WTC11 (cell line): ENCODE measurements at regions of chr6 and their contacts with region 1.

Region 1: DNA sequence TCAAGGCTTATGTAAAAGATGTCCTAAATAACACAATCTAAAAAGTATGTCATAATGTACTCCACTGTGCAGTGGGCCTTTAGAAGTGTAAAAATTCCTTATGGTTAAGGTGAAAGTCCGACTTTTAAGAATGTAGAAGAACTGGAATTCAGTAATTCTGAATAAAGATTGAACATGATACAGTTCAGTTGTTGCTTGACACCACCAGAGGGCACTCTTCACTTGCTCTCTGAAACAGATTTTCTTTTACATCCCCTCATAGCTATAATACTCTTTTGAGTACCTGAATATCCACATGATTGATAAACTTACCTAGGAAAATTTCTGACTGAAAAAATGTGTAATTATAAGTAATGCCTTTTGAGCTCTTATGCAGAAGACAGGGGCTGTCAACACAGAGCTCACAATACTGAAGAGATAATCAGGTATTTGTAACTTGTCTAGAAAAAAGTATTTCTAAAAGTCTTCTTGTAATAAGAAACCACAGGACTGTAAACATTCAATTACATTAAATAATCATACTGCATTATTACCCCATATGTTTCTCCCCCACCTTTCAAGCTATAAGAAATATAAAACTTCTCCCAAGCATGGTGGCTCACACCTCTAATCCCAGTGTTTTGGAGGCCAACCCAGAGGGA is 92.1 kb downstream of the POPDC3 start:
- DNase-seq: no peak
- ATAC-seq: peak; percentile 20; the same call in 1 of the 2 replicates
- H3K4me3 Mint-ChIP-seq: no peak overlapping the region
- H3K27ac Mint-ChIP-seq: no peak overlapping the region
- H3K4me1 Mint-ChIP-seq: no peaks in the 10 kb centered on the region
- H3K27me3 Mint-ChIP-seq: no peaks in the 10 kb centered on the region
- CTCF ChIP-seq: peak; percentile 79

Region 2: GRCh38 chr6:105363100-105363754 is 275.5 kb after region 1 on chr6:
- CTCF ChIA-PET with region 1: interaction called, 20 read pairs
- POLR2A ChIA-PET with region 1: no interaction called
- DNase-seq: no peak
- ATAC-seq: no peak
- H3K4me3 Mint-ChIP-seq: no peak overlapping the region
- H3K27ac Mint-ChIP-seq: no peak overlapping the region
- H3K4me1 Mint-ChIP-seq: peaks cover 2% of the 10 kb centered on the region; the same call in 1 of the 2 replicates
- H3K27me3 Mint-ChIP-seq: no peaks in the 10 kb centered on the region
- CTCF ChIP-seq: no peak

Region 3: DNA sequence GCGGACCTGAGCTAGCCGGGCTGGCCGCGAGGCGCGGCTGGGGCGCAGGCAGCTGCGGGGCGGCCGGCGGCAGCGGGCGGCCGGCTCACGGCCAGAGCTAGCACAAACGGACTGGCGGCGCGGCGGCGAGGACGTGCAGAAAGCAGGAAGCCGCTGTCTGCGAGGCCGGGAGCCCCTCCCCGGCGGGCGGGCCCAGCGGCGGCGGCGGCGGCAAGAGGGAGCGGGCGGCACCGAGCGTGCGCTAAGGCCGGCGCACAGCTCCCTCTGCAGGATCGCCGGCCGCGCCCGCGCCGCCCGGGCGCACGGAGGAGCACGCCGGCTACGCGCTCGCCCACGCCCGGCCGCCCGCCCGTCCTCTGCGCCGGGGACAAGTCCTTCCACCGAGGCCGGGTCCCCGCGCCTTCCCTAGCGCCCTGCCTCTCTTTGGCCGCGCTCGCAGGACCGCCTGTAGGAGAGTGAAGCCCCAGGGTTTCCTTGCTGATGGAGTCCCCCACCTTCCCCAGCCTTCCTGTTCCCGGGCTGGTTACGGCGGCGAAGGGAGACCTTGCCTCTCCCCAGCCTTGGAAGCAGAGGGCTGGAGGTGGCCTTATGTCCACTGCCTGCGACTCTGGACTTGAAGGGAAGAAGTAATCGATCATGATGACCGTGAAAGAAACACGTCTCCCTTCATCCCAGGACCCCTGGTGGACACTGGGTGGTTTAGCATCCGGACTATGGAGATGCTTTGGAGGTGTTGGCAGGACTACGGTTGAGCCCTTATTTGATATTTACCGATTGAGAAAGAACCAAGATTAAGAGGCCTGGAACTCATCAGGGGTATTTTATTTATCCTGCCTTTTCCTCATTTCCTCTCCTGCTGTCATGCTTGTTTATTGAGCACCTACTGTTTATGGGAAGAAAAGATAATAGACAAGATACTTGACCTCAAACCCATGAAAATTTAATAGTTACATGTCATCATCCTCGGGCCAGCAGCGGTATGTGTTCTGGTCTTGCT is 315.5 kb after region 1 on chr6 and contains the start of gene PREP:
- CTCF ChIA-PET with region 1: interaction called, 10 read pairs
- POLR2A ChIA-PET with region 1: no interaction called
- DNase-seq: peak; percentile 83
- ATAC-seq: peak; percentile 82
- H3K4me3 Mint-ChIP-seq: peak within 1 kb of the TSS; percentile 82
- H3K27ac Mint-ChIP-seq: no peak within 1 kb of the TSS
- H3K4me1 Mint-ChIP-seq: peaks cover 47% of the 10 kb centered on the region
- H3K27me3 Mint-ChIP-seq: peaks cover 4% of the 10 kb centered on the region
- CTCF ChIP-seq: peak; percentile 67
- total RNA-seq, gene PREP: 58.8 to 68.5 TPM (median 66.3 TPM) in 3 replicates